ENCODE measurements at regions of chr1 and their contacts with region 1.

Region 1: GRCh38 chr1:178031856-178032320 is 62.0 kb upstream of the RASAL2 start:
- DNase-seq: peak; percentile 97
- H3K4me3 Mint-ChIP-seq: no peak overlapping the region
- H3K27ac Mint-ChIP-seq: no peak overlapping the region
- H3K4me1 Mint-ChIP-seq: no peaks in the 10 kb centered on the region
- H3K27me3 Mint-ChIP-seq: no peaks in the 10 kb centered on the region
- CTCF ChIP-seq: peak; percentile 92

Region 2: DNA sequence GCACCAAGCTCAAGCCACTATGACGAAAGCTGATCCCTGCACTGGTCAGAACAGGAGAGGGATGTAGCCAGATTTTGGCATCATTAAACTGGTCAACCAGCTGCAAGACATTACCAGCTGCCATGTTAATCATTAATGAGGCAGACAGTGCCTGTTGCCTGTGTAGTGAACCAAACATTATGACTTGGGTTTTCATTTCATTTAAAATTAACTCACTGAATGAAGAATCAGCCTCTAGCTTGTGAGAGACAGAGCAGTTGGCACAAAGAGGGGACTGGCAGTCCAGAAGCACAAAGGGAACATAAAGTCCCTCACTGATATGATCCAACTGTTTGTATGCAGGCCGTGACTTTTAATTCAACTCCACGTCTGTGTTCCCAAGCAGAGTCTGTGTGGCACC is 380.9 kb before region 1 on chr1:
- CTCF ChIA-PET with region 1: no interaction called
- POLR2A ChIA-PET with region 1: no interaction called
- intact Hi-C with region 1: no loop called
- DNase-seq: no peak
- H3K4me3 Mint-ChIP-seq: no peak overlapping the region
- H3K27ac Mint-ChIP-seq: no peak overlapping the region
- H3K4me1 Mint-ChIP-seq: no peaks in the 10 kb centered on the region
- H3K27me3 Mint-ChIP-seq: peaks cover 8% of the 10 kb centered on the region
- CTCF ChIP-seq: no peak

Region 3: GRCh38 chr1:177873238-177873637 is 158.7 kb before region 1 on chr1:
- CTCF ChIA-PET with region 1: no interaction called
- POLR2A ChIA-PET with region 1: no interaction called
- intact Hi-C with region 1: no loop called
- DNase-seq: peak; percentile 68
- H3K4me3 Mint-ChIP-seq: no peak overlapping the region
- H3K27ac Mint-ChIP-seq: no peak overlapping the region
- H3K4me1 Mint-ChIP-seq: peaks cover 9% of the 10 kb centered on the region
- H3K27me3 Mint-ChIP-seq: no peaks in the 10 kb centered on the region
- CTCF ChIP-seq: no peak

Region 4: GRCh38 chr1:177953549-177953948 is 78.3 kb before region 1 on chr1:
- CTCF ChIA-PET with region 1: interaction called, 12 read pairs
- POLR2A ChIA-PET with region 1: no interaction called
- intact Hi-C with region 1: loop called (anchors 2 kb)
- DNase-seq: no peak
- H3K4me3 Mint-ChIP-seq: no peak overlapping the region
- H3K27ac Mint-ChIP-seq: no peak overlapping the region
- H3K4me1 Mint-ChIP-seq: no peaks in the 10 kb centered on the region
- H3K27me3 Mint-ChIP-seq: no peaks in the 10 kb centered on the region
- CTCF ChIP-seq: no peak

Region 5: DNA sequence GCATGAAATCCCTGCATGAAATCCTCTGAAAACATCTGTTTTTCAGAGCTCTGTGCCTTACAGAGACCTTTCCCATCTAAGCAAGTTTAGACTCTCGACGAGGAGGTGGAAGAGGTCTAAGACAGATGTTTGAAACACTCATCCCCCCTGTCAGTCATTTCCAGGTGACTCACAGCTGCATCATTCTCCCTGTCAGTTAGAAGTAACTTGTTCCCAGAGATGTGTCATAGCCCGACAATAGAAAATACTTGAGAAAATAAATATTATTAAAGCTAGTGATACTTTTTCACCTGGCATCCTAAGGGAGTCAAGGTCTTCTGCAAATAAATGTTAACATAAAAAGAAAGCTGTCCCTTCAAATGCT is 20.4 kb before region 1 on chr1:
- CTCF ChIA-PET with region 1: interaction called, 47 read pairs
- POLR2A ChIA-PET with region 1: interaction called, 3 read pairs
- intact Hi-C with region 1: no loop called
- DNase-seq: peak; percentile 90
- H3K4me3 Mint-ChIP-seq: no peak overlapping the region
- H3K27ac Mint-ChIP-seq: no peak overlapping the region
- H3K4me1 Mint-ChIP-seq: peaks cover 14% of the 10 kb centered on the region
- H3K27me3 Mint-ChIP-seq: no peaks in the 10 kb centered on the region
- CTCF ChIP-seq: no peak

Region 6: GRCh38 chr1:178093205-178093957 is 61.5 kb after region 1 on chr1:
- CTCF ChIA-PET with region 1: interaction called, 47 read pairs
- POLR2A ChIA-PET with region 1: interaction called, 8 read pairs
- intact Hi-C with region 1: no loop called
- DNase-seq: peak; percentile 98
- H3K4me3 Mint-ChIP-seq: peak overlapping the region; percentile 82
- H3K27ac Mint-ChIP-seq: peak overlapping the region; percentile 90
- H3K4me1 Mint-ChIP-seq: peaks cover 38% of the 10 kb centered on the region
- H3K27me3 Mint-ChIP-seq: no peaks in the 10 kb centered on the region
- CTCF ChIP-seq: peak; percentile 7

Region 7: DNA sequence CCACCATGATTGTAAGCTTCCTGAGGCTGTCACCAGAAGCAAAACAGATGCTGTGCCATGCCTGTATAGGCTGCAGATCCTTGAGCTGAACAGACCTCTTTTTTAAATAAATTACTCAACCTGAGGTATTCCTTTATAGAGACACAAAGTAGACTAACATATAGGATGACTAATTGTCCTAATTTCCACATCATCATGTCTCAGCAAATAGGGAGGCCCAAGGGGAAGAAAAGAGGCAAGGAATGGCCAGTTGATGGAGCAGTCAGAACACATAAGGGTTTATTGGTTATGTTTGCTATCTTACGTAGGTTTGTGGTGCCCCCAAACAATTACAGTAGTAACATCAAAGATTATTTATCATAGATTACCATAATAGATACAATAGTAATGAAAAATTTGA is 188.2 kb after region 1 on chr1:
- CTCF ChIA-PET with region 1: interaction called, 12 read pairs
- POLR2A ChIA-PET with region 1: no interaction called
- intact Hi-C with region 1: no loop called
- DNase-seq: peak; percentile 76
- H3K4me3 Mint-ChIP-seq: no peak overlapping the region
- H3K27ac Mint-ChIP-seq: peak overlapping the region; percentile 17
- H3K4me1 Mint-ChIP-seq: peaks cover 36% of the 10 kb centered on the region
- H3K27me3 Mint-ChIP-seq: no peaks in the 10 kb centered on the region
- CTCF ChIP-seq: no peak

Region 8: DNA sequence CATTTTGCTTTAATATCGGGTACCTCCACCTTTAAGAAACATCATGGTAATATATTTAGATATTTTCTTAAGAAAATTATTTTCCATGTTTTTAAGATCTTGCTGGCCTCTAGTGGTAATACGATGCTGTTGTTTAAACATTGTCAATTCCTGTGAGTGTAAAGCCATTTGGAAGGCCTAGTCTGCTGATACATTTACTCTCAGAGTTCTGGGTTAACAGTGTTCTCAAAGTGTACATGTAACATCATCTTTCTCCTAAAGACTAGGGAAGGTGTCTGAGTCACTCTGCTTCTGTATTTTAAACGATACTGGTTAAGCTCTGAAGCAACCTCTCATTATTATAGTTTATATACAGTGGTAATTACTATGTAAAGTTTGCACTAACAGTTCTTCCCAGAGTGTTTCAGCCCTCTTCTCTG is 251.1 kb after region 1 on chr1:
- CTCF ChIA-PET with region 1: interaction called, 171 read pairs
- POLR2A ChIA-PET with region 1: interaction called, 14 read pairs
- intact Hi-C with region 1: loop called (anchors 1 kb)
- DNase-seq: peak; percentile 85
- H3K4me3 Mint-ChIP-seq: no peak overlapping the region
- H3K27ac Mint-ChIP-seq: peak overlapping the region; percentile 28
- H3K4me1 Mint-ChIP-seq: peaks cover 38% of the 10 kb centered on the region
- H3K27me3 Mint-ChIP-seq: no peaks in the 10 kb centered on the region
- CTCF ChIP-seq: peak; percentile 77

Region 9: DNA sequence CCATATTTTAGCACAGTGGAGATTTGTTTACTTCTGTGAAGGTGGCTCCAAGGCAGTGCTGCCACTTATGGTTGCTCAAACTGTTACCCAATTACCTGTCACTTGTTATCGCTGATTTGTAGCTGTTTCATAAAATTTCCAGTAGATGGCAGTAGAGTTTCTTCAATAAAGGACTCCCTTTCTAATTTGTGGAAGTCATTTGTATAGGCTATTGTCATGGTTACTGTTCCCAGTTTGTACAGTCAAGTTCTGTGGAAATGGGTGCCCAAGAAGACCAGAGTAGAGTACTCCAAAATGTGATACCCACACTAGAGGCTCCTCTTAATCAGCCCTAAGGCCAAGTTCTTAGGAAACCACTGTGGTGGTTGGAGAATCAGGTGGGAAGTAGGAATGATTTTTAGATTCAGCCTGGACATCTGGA is 278.8 kb after region 1 on chr1:
- CTCF ChIA-PET with region 1: interaction called, 10 read pairs
- POLR2A ChIA-PET with region 1: no interaction called
- intact Hi-C with region 1: no loop called
- DNase-seq: peak; percentile 84
- H3K4me3 Mint-ChIP-seq: no peak overlapping the region
- H3K27ac Mint-ChIP-seq: peak overlapping the region; percentile 77
- H3K4me1 Mint-ChIP-seq: peaks cover 15% of the 10 kb centered on the region
- H3K27me3 Mint-ChIP-seq: no peaks in the 10 kb centered on the region
- CTCF ChIP-seq: peak; percentile 82

Measured in MCF 10A (cell line).